Activated B cell treated with CpG ODN at 0.5 μM for 24 hours (primary cell): ENCODE measurements at regions of chr9 and their contacts with region 1.

Region 1: DNA sequence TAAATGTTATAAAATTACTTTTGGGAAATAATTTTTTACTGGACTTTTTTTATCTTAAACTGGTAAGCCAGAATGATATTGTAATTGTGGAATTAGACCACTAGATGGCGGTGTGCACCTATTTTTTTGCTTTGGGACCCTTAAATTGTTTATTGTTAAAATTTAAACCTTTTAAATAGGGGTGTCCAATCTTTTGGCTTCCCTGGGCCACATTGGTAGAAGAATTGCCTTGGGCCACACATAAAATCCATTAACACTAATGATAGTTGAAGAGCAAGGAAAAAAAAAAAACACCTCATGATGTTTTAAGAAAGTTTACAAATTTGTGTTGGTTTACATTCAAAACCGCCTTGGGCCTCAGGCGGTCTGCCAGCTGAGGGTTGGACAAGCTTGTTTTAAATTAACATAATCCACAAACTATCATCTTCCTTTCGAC is 28.4 kb upstream of the GADD45G start:
- DNase-seq: no peak
- ATAC-seq: no peak
- H3K4me3 Mint-ChIP-seq: no peak overlapping the region
- H3K27ac Mint-ChIP-seq: no peak overlapping the region
- H3K4me1 Mint-ChIP-seq: no peaks in the 10 kb centered on the region
- H3K27me3 Mint-ChIP-seq: peaks cover 32% of the 10 kb centered on the region
- CTCF ChIP-seq: peak; percentile 54

Region 2: DNA sequence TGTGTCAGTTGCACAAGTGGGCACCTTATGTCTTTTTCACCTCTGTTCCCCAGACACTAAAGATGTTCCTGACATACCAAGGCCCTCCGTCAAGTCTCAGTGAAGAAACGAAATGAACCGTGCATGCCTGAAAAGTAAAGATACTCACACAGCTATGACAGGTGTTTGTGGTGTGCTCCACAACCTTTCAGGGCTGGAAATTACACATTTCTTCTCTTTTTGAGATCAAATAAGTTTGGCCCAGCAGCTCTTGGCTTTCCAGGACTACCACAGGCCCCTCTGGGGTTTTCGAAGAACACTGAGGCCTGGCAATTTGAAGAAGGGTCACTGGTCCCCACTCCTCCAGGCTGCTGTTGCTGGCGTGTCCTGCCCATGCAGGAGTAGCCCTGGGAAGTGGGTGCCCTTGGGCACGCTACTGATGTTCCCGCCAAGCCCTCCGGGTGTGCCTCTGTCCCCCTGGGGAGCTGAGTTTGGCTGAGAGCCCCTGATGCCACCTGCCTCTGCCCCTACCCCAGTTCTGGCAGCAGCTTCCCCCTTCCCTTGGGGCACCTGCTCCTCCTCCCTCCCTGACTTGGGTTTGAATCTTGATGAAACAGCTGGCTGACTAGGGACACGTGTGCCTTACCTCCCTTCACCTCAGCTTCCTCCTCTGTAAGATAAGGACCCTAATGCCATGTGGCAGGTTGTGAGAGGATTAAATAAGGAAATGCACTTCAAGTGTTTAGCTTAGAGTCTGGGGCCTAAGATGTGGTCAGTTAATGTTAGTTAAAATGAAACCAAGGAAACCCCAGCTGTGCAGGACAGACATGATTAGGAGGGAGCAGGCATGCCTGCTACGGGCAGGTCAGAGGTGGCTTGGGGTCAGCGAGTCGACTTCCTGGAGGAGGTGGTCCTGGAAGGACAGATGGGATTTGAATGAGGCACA is 20.7 kb before region 1 on chr9:
- CTCF ChIA-PET with region 1: no interaction called
- POLR2A ChIA-PET with region 1: no interaction called
- intact Hi-C with region 1: no loop called
- DNase-seq: no peak
- ATAC-seq: peak; percentile 25
- H3K4me3 Mint-ChIP-seq: peak overlapping the region; percentile 16
- H3K27ac Mint-ChIP-seq: no peak overlapping the region
- H3K4me1 Mint-ChIP-seq: peaks cover 18% of the 10 kb centered on the region
- H3K27me3 Mint-ChIP-seq: peaks cover 10% of the 10 kb centered on the region
- CTCF ChIP-seq: no peak

Region 3: GRCh38 chr9:89597711-89598625 is 21.5 kb after region 1 on chr9:
- CTCF ChIA-PET with region 1: interaction called, 19 read pairs
- POLR2A ChIA-PET with region 1: no interaction called
- intact Hi-C with region 1: loop called (anchors 1 kb)
- DNase-seq: no peak
- ATAC-seq: peak; percentile 43
- H3K4me3 Mint-ChIP-seq: no peak overlapping the region
- H3K27ac Mint-ChIP-seq: no peak overlapping the region
- H3K4me1 Mint-ChIP-seq: peaks cover 1% of the 10 kb centered on the region
- H3K27me3 Mint-ChIP-seq: peaks cover 8% of the 10 kb centered on the region
- CTCF ChIP-seq: peak; percentile 23

Region 4: DNA sequence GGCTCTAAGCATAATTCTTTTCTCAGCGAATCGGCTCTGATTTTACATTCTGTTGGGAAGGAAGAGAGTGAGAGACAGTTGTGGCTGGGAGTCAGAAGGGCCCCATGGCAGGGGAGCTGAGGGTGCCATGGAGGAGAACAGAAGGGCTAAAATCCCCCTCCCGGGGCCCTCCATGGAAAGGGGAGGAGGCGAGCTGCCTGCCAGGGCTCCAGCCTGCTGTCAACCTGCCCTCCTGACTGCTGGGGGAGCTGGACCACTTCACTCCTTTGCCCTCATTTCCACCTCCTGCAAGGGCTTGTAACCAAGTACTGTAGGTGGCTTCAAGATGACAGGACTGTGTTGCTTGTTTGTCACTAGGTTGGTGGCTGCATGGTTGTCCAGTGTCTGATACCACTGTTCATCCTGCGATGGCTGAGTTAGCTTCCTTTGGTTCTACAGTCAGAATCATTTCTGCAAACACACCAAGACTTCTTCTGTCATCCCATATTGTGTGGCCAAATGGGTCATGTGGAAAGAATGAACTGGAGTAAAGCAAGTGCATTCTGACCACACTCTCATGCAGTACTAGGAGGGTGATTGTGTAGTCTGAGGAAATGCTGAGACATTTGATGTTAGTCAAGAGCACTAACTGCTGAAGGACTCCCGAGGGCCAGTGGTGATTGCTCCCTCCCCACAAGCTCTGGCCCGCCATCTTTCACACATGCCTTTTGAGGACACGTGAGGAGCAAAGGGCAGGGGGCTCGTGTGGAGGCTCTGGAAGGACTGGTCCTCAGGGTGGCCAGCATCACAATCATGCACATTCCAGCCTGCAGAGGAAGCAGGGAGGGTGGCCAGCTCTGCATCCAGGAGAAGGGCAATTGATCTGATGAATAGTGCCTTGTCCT is 335.5 kb after region 1 on chr9:
- CTCF ChIA-PET with region 1: no interaction called
- POLR2A ChIA-PET with region 1: no interaction called
- intact Hi-C with region 1: no loop called
- DNase-seq: no peak
- ATAC-seq: no peak
- H3K4me3 Mint-ChIP-seq: no peak overlapping the region
- H3K27ac Mint-ChIP-seq: no peak overlapping the region
- H3K4me1 Mint-ChIP-seq: no peaks in the 10 kb centered on the region
- H3K27me3 Mint-ChIP-seq: no peaks in the 10 kb centered on the region
- CTCF ChIP-seq: no peak